CD8-positive, alpha-beta T cell (primary cell): ENCODE measurements at regions of chr15 and their contacts with region 1.

Region 1: GRCh38 chr15:54082836-54083492 is 104.7 kb downstream of the UNC13C start:
- DNase-seq: peak in 2 of 9 experiments; percentile 1 to 16
- ATAC-seq: no peak
- H3K4me3 ChIP-seq: no peak overlapping the region
- H3K4me3 Mint-ChIP-seq: no peak overlapping the region
- H3K27ac ChIP-seq: no peak overlapping the region
- H3K27ac Mint-ChIP-seq: no peak overlapping the region
- H3K4me1 ChIP-seq: no peaks in the 10 kb centered on the region
- H3K4me1 Mint-ChIP-seq: no peaks in the 10 kb centered on the region
- H3K27me3 ChIP-seq: no peaks in the 10 kb centered on the region
- H3K27me3 Mint-ChIP-seq: peaks cover 3% of the 10 kb centered on the region
- CTCF ChIP-seq: peak; percentile 53

Region 2: GRCh38 chr15:53910236-53910849 is 172.6 kb before region 1 on chr15:
- CTCF ChIA-PET with region 1: no interaction called
- POLR2A ChIA-PET with region 1: no interaction called
- intact Hi-C with region 1: no loop called
- DNase-seq: no peak
- ATAC-seq: no peak
- H3K4me3 ChIP-seq: no peak overlapping the region
- H3K4me3 Mint-ChIP-seq: no peak overlapping the region
- H3K27ac ChIP-seq: no peak overlapping the region
- H3K27ac Mint-ChIP-seq: no peak overlapping the region
- H3K4me1 ChIP-seq: no peaks in the 10 kb centered on the region
- H3K4me1 Mint-ChIP-seq: no peaks in the 10 kb centered on the region
- H3K27me3 ChIP-seq: no peaks in the 10 kb centered on the region
- H3K27me3 Mint-ChIP-seq: no peaks in the 10 kb centered on the region
- CTCF ChIP-seq: no peak

Region 3: DNA sequence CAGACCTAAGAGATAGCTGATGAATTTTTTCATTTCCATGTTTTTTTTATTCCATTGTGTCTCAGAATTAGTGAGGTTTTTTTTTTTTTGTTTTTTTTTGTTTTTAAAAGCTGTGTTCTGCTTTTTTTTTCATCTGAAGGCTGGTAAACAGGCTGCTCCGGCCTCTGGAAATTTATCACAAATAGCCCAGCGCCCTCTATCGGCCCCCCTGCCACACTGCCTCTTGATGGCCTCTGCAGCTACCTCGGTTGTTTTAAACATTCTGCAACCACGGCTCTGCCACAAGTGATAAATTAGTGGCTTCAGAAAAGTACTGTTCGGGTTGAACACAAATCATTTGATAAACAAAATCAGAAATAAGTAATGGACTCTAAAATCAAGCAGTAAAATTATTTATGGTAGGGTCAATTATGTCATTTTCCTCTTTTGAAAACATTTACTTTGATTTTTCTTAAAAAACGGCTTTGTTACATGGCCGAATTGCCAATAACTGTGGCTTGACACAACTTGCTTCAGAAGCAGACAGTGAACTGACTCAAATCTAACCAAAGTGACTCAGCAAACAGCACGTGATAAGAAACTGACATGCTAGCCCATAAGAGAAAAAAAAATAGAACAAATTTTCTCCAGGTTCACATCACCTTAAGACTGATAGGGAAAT is 1026.0 kb after region 1 on chr15:
- CTCF ChIA-PET with region 1: no interaction called
- POLR2A ChIA-PET with region 1: no interaction called
- intact Hi-C with region 1: loop called in 1 of 2 experiments (anchors 2 kb)
- DNase-seq: peak; percentile 4 to 54 (median 29)
- ATAC-seq: no peak
- H3K4me3 ChIP-seq: no peak overlapping the region
- H3K4me3 Mint-ChIP-seq: no peak overlapping the region
- H3K27ac ChIP-seq: no peak overlapping the region
- H3K27ac Mint-ChIP-seq: no peak overlapping the region
- H3K4me1 ChIP-seq: no peaks in the 10 kb centered on the region
- H3K4me1 Mint-ChIP-seq: no peaks in the 10 kb centered on the region
- H3K27me3 ChIP-seq: no peaks in the 10 kb centered on the region
- H3K27me3 Mint-ChIP-seq: peaks cover 2% of the 10 kb centered on the region
- CTCF ChIP-seq: peak; percentile 53